ENCODE measurements at regions of chr2 and their contacts with region 1.

Region 1: GRCh38 chr2:127453392-127454171 is 35.4 kb downstream of the PROC start:
- DNase-seq: peak; percentile 5
- H3K4me3 ChIP-seq: no peak overlapping the region
- H3K27ac ChIP-seq: no peak overlapping the region
- H3K4me1 ChIP-seq: no peaks in the 10 kb centered on the region
- H3K27me3 ChIP-seq: no peaks in the 10 kb centered on the region
- CTCF ChIP-seq: peak; percentile 2 to 12
- POLR2A ChIP-seq: no peak

Region 2: GRCh38 chr2:127277028-127277427 is 176.6 kb before region 1 on chr2:
- CTCF ChIA-PET with region 1: no interaction called
- POLR2A ChIA-PET with region 1: no interaction called
- dilution Hi-C with region 1: no loop called
- intact Hi-C with region 1: no loop called
- DNase-seq: no peak
- H3K4me3 ChIP-seq: no peak overlapping the region
- H3K27ac ChIP-seq: no peak overlapping the region
- H3K4me1 ChIP-seq: no peaks in the 10 kb centered on the region
- H3K27me3 ChIP-seq: no peaks in the 10 kb centered on the region
- CTCF ChIP-seq: no peak
- POLR2A ChIP-seq: no peak

Region 3: DNA sequence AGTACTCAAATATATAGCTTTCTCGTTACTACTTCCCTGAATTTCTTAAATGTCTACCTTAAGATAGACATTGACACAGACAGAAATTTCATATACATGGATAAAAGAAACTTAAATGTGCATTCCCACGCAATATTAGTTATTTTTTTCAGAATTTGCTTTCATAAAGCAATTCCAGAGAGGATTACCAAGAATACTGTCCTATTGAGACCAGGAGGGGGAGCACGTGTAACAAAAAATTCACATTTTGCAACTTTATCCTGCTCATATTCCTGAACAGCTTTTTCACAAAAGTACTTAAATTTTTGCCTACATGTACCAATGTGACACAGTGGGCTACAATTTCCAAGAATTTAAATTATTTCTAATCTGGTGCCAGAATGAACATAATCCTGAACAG is 128.9 kb before region 1 on chr2:
- CTCF ChIA-PET with region 1: interaction called, 25 read pairs
- POLR2A ChIA-PET with region 1: no interaction called
- dilution Hi-C with region 1: no loop called
- intact Hi-C with region 1: no loop called
- DNase-seq: peak; percentile 66
- H3K4me3 ChIP-seq: no peak overlapping the region
- H3K27ac ChIP-seq: no peak overlapping the region
- H3K4me1 ChIP-seq: no peaks in the 10 kb centered on the region
- H3K27me3 ChIP-seq: no peaks in the 10 kb centered on the region
- CTCF ChIP-seq: peak; percentile 38 to 48
- POLR2A ChIP-seq: no peak

Region 4: GRCh38 chr2:127355386-127356008 is 98.1 kb before region 1 on chr2:
- CTCF ChIA-PET with region 1: interaction called, 4 read pairs
- POLR2A ChIA-PET with region 1: no interaction called
- dilution Hi-C with region 1: no loop called
- intact Hi-C with region 1: loop called (anchors 2 kb)
- DNase-seq: peak; percentile 25
- H3K4me3 ChIP-seq: no peak overlapping the region
- H3K27ac ChIP-seq: no peak overlapping the region
- H3K4me1 ChIP-seq: no peaks in the 10 kb centered on the region
- H3K27me3 ChIP-seq: no peaks in the 10 kb centered on the region
- CTCF ChIP-seq: peak; percentile 49 to 51
- POLR2A ChIP-seq: no peak